Psoas muscle (tissue), 8 donors: ENCODE measurements at regions of chrX and their contacts with region 1.

Region 1: DNA sequence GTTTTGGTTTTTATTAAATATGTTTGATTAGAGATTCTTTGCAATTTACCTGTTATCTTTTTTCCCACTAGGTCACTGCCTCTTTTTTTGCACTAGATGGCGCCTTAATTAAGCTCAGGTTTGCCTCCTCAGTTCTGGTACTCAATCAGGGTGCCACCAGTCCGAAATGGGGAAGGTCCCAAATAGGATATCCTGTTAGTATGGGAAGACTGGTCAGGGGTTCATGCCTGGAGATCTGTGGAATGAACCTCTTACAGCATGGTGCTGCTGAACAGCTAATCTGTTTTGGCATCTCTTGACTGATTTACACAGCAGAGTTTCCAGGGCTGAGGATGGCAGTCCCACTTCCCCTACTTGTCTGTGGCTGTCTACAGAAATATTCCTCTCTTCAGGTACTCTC is 24.2 kb upstream of the VSIG1 start:
- DNase-seq: no peak
- ATAC-seq: peak in 2 of 4 donors; percentile 30 to 49
- H3K4me3 ChIP-seq: no peak overlapping the region
- H3K27ac ChIP-seq: no peak overlapping the region
- H3K4me1 ChIP-seq: no peaks in the 10 kb centered on the region
- H3K27me3 ChIP-seq: peaks cover 0 to 7% (median 0%) of the 10 kb centered on the region in 3 donors
- CTCF ChIP-seq: peak; percentile 51

Region 2: GRCh38 chrX:107902721-107903120 is 117.9 kb before region 1 on chrX:
- intact Hi-C with region 1: no loop called
- DNase-seq: no peak
- ATAC-seq: no peak
- H3K4me3 ChIP-seq: no peak overlapping the region
- H3K27ac ChIP-seq: no peak overlapping the region
- H3K4me1 ChIP-seq: no peaks in the 10 kb centered on the region
- H3K27me3 ChIP-seq: peaks cover 0 to 14% (median 0%) of the 10 kb centered on the region in 3 donors
- CTCF ChIP-seq: no peak

Region 3: DNA sequence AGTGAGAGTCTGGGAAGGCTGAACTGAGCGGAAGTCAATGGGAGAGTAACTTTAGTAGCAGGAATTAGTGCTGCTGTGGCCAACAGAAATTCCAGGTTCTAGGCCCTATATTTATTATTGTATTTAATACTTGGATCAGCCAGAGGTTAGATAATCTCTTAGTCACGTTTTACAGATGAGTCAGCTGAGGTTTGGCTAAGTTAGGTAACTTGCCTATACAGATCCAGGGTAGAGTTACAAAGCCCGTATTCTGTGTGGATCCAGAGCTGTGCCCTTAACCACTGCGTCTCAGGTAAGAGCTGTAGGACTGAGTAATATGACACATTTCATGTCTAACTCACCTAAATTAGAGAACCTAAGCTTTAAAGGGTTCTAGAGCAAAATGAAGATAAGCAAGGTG is 50.3 kb after region 1 on chrX:
- intact Hi-C with region 1: loop called (anchors 2 to 5 kb)
- DNase-seq: no peak
- ATAC-seq: peak; percentile 30 to 77 (median 54)
- H3K4me3 ChIP-seq: no peak overlapping the region
- H3K27ac ChIP-seq: no peak overlapping the region
- H3K4me1 ChIP-seq: no peaks in the 10 kb centered on the region
- H3K27me3 ChIP-seq: peaks cover 0 to 39% (median 0%) of the 10 kb centered on the region in 3 donors
- CTCF ChIP-seq: no peak

Region 4: DNA sequence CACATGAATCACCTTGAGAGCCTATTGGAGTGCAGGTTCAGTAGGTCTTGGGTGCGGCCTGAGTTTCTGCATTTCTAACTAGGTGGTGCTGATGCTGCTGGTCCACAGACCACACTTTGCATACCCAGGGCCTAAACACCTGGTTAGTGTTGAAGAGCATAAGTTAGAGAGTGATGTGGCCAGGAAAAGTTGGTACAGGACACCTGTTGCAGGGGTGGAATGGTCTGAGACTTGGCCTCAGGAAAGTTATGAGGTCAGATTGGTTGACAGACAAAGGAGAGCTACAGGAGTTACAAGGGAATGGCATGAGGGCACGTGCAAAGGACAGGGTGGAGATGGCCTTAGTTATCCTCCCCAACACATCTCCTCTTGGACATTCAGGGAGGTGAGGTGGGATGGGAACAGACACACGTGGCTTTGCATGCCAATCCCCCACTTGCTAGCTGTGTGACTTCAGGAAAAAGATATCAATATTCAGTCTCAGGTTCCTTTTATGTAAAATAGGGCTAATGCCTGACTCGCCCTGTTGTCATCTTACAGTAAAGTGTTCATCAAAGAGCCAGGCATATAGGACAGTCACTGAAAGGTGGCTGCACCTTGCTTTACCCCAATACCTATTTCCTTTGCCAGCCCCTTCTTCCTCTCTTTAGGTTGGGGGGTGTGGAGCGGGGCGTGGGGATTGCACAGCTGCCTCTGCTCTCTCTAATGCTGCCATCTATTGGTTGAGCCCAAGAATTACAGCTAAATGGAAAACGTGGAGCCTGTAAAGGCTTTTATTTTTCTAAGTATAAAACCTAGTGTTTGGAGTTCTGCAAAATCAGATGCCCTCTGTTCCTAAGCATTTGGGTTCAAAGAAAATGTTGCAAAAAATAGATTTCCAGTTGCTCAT is 118.4 kb after region 1 on chrX:
- intact Hi-C with region 1: loop called (anchors 5 kb)
- DNase-seq: no peak
- ATAC-seq: peak in 2 of 4 donors; percentile 51 to 74
- H3K4me3 ChIP-seq: no peak overlapping the region
- H3K27ac ChIP-seq: no peak overlapping the region
- H3K4me1 ChIP-seq: no peaks in the 10 kb centered on the region
- H3K27me3 ChIP-seq: no peaks in the 10 kb centered on the region
- CTCF ChIP-seq: peak; percentile 47

Region 5: GRCh38 chrX:108468486-108468885 is 447.9 kb after region 1 on chrX:
- intact Hi-C with region 1: no loop called
- DNase-seq: no peak
- ATAC-seq: no peak
- H3K4me3 ChIP-seq: no peak overlapping the region
- H3K27ac ChIP-seq: no peak overlapping the region
- H3K4me1 ChIP-seq: no peaks in the 10 kb centered on the region
- H3K27me3 ChIP-seq: no peaks in the 10 kb centered on the region
- CTCF ChIP-seq: no peak